ENCODE measurements at regions of chr7 and their contacts with region 1.

Region 1: DNA sequence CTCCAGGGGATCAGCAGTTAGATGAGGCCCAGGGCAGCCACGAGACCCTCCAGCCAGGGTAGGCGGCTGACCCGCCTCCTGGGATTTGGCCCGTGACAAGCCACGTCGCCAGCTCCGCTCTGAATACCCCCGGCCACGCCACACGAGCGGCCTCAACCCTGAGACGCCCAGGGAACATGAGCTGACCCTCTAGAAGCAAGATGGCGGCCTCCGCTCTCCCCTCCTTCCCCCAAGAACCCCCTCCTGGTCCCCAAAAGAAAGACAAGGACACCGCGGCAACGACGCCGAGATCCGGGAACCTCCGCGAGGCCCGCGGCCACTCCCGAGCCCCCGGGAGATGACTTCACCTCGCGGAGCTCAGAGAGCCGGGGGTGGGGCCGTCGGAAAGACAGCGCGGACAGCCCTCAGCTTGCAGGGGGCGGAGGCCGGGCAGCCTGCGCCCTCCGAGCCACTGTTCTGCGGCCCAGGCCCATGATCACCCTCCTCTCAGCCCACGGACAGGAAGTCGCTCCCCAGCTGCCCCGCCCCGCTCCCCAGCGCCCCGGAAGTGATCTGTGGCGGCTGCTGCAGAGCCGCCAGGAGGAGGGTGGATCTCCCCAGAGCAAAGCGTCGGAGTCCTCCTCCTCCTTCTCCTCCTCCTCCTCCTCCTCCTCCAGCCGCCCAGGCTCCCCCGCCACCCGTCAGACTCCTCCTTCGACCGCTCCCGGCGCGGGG is at the start of gene RALA:
- DNase-seq: peak; percentile 91 to 93
- ATAC-seq: peak; percentile 99
- H3K4me3 ChIP-seq: peak within 1 kb of the TSS; percentile 77
- H3K27ac ChIP-seq: peak within 1 kb of the TSS; percentile 80 to 99
- H3K4me1 ChIP-seq: peaks cover 33% of the 10 kb centered on the region
- CTCF ChIP-seq: no peak
- EP300 ChIP-seq: no peak; a peak in 1 of 5 replicates
- POLR2A ChIP-seq: peak; percentile 66; the same call in 1 of the 2 replicates
- RAD21 ChIP-seq: no peak
- polyA plus RNA-seq, gene RALA: 19.0 and 30.1 TPM in 2 replicates

Region 2: GRCh38 chr7:39659356-39660013 is 36.3 kb after region 1 on chr7:
- CTCF ChIA-PET with region 1: no interaction called
- POLR2A ChIA-PET with region 1: no interaction called
- DNase-seq: no peak
- ATAC-seq: no peak
- H3K4me3 ChIP-seq: no peak overlapping the region
- H3K27ac ChIP-seq: peak overlapping the region in 1 of 2 experiments; percentile 29; a peak in 1 of 6 replicates
- H3K4me1 ChIP-seq: peaks cover 8% of the 10 kb centered on the region; the same call in 2 of the 3 replicates
- CTCF ChIP-seq: no peak
- EP300 ChIP-seq: no peak
- POLR2A ChIP-seq: no peak
- RAD21 ChIP-seq: no peak

Region 3: GRCh38 chr7:39732837-39733804 is 109.9 kb after region 1 on chr7:
- CTCF ChIA-PET with region 1: interaction called, 5 read pairs
- POLR2A ChIA-PET with region 1: interaction called, 13 read pairs
- DNase-seq: peak; percentile 90 to 91
- ATAC-seq: peak; percentile 97 to 98
- H3K4me3 ChIP-seq: peak overlapping the region; percentile 57
- H3K27ac ChIP-seq: peak overlapping the region; percentile 73 to 84
- H3K4me1 ChIP-seq: peaks cover 15% of the 10 kb centered on the region
- CTCF ChIP-seq: no peak
- EP300 ChIP-seq: no peak
- POLR2A ChIP-seq: peak; percentile 66
- RAD21 ChIP-seq: no peak

Region 4: DNA sequence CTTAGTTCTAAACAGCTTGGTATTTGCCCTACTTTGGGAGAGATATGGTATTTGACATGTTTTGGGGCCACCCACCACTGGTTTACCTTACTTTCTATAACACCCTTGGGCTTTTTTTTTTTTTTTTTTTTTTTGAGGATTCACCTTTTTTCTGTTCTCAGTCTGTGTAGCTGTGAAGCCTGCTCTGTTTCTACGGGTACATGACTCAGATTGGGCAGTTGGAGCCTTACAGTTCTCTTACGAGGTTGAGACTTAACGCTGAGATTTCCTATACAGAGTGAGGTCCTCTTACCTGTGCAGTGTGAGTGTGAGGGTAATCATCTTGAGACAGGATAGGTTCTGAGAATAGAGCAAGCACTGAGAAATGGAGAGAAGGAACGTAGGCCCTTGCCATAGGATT is 404.4 kb after region 1 on chr7:
- CTCF ChIA-PET with region 1: no interaction called
- POLR2A ChIA-PET with region 1: interaction called, 10 read pairs
- DNase-seq: no peak
- ATAC-seq: no peak
- H3K4me3 ChIP-seq: no peak overlapping the region
- H3K27ac ChIP-seq: no peak overlapping the region
- H3K4me1 ChIP-seq: no peaks in the 10 kb centered on the region
- CTCF ChIP-seq: no peak
- EP300 ChIP-seq: no peak
- POLR2A ChIP-seq: no peak
- RAD21 ChIP-seq: no peak

Measured in A549 (cell line).